Heart left ventricle (tissue), 16 donors: ENCODE measurements at regions of chr5 and their contacts with region 1.

Region 1: GRCh38 chr5:150436141-150436680 is 13.3 kb downstream of the RPS14 start:
- DNase-seq: peak; percentile 85 to 93 (median 88)
- ATAC-seq: peak; percentile 53 to 87 (median 85)
- H3K4me3 ChIP-seq: no peak overlapping the region
- H3K27ac ChIP-seq: no peak overlapping the region
- H3K4me1 ChIP-seq: peaks cover 0 to 16% (median 1%) of the 10 kb centered on the region in 12 donors
- H3K27me3 ChIP-seq: no peaks in the 10 kb centered on the region
- CTCF ChIP-seq: peak; percentile 82 to 94 (median 89)
- POLR2A ChIP-seq: no peak

Region 2: DNA sequence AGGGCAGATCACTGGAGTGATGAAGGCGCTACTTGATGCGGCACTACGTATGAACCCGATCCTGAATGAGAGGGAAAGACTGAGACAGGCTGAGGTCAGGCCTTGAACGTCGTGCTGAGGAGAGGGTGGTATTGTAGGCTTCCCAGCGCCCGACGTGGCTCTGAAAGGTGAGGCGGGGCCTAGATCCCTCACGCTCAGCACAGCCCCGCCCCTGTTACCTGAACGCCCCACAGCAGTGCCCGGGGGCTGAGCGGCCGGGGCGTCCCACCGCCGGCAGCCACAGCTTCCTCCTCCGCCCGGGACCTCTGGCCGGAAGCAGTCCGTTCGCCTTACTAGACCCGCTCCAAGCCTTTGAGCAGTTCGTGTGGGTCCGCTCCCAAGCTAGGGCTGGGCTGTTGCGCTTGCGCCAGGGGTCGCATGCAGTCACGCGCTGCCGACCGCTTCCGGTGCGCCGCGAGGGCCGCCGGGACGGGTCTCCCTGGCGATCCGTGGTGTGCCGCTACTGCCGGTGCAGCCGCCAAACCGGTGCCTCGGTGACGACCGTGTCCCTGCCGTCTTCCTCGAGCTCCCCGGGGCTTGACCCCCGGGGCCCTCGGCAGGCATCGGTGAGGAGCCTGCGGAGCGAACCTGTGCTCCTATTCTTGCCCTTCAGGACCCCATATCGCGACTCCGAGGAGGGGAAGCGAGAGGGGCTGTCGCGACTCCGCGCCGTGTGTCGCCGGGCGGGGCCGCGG is 435.8 kb before region 1 on chr5 and contains the starts of genes HMGXB3 and TIGD6:
- intact Hi-C with region 1: loop called in 1 of 10 experiments (anchors 10 kb)
- DNase-seq: peak; percentile 93 to 97 (median 96)
- ATAC-seq: peak; percentile 95 to 97 (median 97)
- H3K4me3 ChIP-seq: peak within 1 kb of the TSS; percentile 62 to 100 (median 92)
- H3K27ac ChIP-seq: peak within 1 kb of the TSS; percentile 72 to 98 (median 88)
- H3K4me1 ChIP-seq: peaks cover 0 to 41% (median 27%) of the 10 kb centered on the region in 12 donors
- H3K27me3 ChIP-seq: no peaks in the 10 kb centered on the region
- CTCF ChIP-seq: peak in 5 of 12 donors; percentile 11 to 38 (median 13)
- POLR2A ChIP-seq: peak; percentile 2 to 80
- total RNA-seq, gene HMGXB3: 12.4 to 25.9 (median 17.5) TPM
- total RNA-seq, gene TIGD6: 1.3 to 4.3 (median 2.6) TPM

Region 3: GRCh38 chr5:150129813-150130492 is 306.3 kb before region 1 on chr5:
- intact Hi-C with region 1: loop called in 5 of 10 experiments (anchors 1 to 10 kb)
- DNase-seq: peak; percentile 73 to 85 (median 79)
- ATAC-seq: peak; percentile 47 to 83 (median 75)
- H3K4me3 ChIP-seq: peak overlapping the region in 7 of 12 donors; percentile 3 to 43 (median 6)
- H3K27ac ChIP-seq: peak overlapping the region in 7 of 12 donors; percentile 3 to 34 (median 20)
- H3K4me1 ChIP-seq: peaks cover 0 to 48% (median 19%) of the 10 kb centered on the region in 12 donors
- H3K27me3 ChIP-seq: no peaks in the 10 kb centered on the region
- CTCF ChIP-seq: peak; percentile 86 to 97 (median 92)
- POLR2A ChIP-seq: no peak

Region 4: GRCh38 chr5:150263801-150264621 is 172.2 kb before region 1 on chr5:
- intact Hi-C with region 1: loop called in 2 of 10 experiments (anchors 10 kb)
- DNase-seq: peak in 2 of 5 donors; percentile 54 to 55
- ATAC-seq: peak in 3 of 4 donors; percentile 62 to 78 (median 63)
- H3K4me3 ChIP-seq: no peak overlapping the region
- H3K27ac ChIP-seq: no peak overlapping the region
- H3K4me1 ChIP-seq: peaks cover 0 to 9% (median 3%) of the 10 kb centered on the region in 12 donors
- H3K27me3 ChIP-seq: no peaks in the 10 kb centered on the region
- CTCF ChIP-seq: no peak
- POLR2A ChIP-seq: no peak

Region 5: GRCh38 chr5:150357326-150358260 is 78.6 kb before region 1 on chr5 and contains the start of gene TCOF1:
- intact Hi-C with region 1: loop called in 1 of 10 experiments (anchors 5 kb)
- DNase-seq: peak; percentile 96 to 98 (median 96)
- ATAC-seq: peak; percentile 97 to 100 (median 99)
- H3K4me3 ChIP-seq: peak within 1 kb of the TSS; percentile 72 to 99 (median 92)
- H3K27ac ChIP-seq: peak within 1 kb of the TSS in 10 of 12 donors; percentile 41 to 76 (median 65)
- H3K4me1 ChIP-seq: peaks cover 0 to 23% (median 12%) of the 10 kb centered on the region in 12 donors
- H3K27me3 ChIP-seq: no peaks in the 10 kb centered on the region
- CTCF ChIP-seq: peak in 1 of 12 donors; percentile 12
- POLR2A ChIP-seq: no peak
- total RNA-seq, gene TCOF1: 12.6 to 29.9 (median 16.0) TPM

Region 6: DNA sequence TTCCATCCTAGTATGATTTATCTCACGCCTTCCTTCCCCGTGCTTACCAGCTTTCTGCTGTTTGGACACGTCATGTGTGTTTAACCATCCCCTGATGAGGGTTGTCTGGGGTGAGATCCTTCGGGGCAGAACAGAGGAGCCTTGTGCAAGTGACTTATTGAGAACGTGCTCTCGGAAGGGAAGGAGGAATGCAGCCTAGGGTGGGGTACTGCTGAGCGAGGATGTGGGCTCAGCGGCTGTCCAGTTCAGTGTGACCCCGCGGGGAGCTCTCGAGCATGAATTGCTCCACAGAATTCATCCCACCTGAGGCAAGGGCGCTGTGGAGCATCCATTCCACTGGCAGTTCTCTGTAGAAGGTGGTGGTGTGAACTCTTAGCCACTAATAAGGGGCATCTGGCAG is 228.8 kb after region 1 on chr5:
- intact Hi-C with region 1: no loop called
- DNase-seq: no peak
- ATAC-seq: no peak
- H3K4me3 ChIP-seq: no peak overlapping the region
- H3K27ac ChIP-seq: no peak overlapping the region
- H3K4me1 ChIP-seq: peaks cover 0 to 14% (median 2%) of the 10 kb centered on the region in 12 donors
- H3K27me3 ChIP-seq: no peaks in the 10 kb centered on the region
- CTCF ChIP-seq: no peak
- POLR2A ChIP-seq: no peak